Left ventricle myocardium superior (tissue), 1 donor: ENCODE measurements at regions of chr2 and their contacts with region 1.

Region 1: DNA sequence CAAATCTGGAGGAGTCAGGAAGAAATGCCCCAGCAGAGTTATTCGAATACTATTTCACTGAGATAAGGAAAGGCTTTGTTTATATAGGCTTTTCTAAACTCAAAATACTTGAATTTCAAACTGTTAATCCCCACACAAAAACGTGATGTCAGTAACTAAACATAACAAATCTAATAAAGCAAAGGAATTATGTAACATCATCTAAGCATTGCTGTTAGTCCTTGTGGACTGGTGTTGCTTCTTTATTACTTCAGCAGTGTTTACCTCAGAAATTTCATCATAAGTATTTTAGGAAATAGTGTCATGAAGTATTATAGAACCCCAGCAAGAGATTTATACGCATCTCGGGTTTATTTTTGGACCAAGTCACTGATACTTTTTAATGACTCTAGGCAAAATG is 19.7 kb upstream of the SANBR start:
- DNase-seq: no peak
- ATAC-seq: no peak

Region 2: DNA sequence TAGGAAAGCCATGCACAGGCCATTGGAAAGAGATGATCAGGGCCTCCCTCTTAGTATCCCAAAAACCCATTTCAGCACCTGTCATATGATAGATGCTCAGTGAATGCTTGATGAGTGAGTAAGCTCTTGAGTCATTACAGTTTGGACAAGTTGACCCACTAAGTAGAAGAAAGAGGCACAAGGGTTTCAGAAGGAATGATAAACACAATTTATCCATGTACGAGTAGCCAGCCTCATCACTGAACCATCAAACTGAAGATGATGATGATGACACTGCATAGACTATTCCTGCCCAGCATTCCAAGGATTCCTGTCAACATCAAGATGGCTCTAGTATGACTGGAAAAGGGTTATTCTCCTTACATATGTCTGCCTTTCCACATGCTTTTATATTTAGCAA is 1088.5 kb before region 1 on chr2:
- intact Hi-C with region 1: no loop called
- DNase-seq: no peak
- ATAC-seq: no peak

Region 3: DNA sequence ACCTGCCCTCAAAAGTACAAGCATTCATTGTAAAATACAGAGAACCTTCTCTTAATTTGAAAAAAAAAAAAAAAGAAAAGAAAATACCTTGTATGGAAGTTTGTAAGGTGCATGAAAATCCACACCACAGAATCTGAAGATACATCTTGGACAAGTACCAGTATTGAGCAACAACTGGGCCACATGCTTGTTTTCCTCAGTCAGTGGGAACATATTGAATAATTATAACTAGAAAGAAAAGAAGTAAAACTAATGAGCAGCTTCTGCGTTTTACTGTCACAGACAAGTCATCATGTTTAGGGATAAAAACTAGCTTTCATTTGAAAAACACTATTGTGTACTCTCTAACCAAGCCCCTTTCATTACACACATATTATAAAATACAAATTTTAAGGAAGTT is 34.3 kb before region 1 on chr2:
- intact Hi-C with region 1: loop called (anchors 2 kb)
- DNase-seq: no peak
- ATAC-seq: no peak

Region 4: DNA sequence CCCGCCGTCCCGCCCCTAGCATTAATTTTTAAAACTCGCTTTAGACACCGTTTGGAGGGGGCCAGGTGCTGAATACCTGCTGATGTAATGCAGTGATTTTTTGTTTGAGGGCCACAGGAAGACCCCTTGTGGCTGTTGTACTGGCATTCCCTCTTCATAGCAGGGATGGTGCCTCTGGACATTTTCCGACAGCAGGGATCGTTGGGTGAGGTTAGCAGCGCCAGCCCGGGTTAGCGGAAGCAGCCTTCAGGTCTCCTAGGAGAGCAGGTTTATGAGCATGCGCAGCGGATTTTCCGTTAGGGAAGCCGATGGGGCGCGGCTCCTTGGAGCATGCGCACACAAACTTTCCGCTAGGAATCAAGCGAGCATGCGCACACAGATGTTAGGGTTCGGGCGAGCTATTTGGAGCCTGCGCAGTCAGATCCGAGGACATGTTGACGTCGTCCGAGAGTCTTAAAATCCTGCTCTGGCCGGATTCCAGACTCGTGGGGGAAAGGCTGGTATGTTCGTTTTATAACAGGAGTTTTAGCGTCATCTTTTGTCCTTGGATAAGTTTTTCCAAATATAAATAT is 98.8 kb after region 1 on chr2:
- intact Hi-C with region 1: no loop called
- DNase-seq: peak; percentile 96
- ATAC-seq: peak; percentile 99

Region 5: GRCh38 chr2:61196671-61197070 is 150.7 kb after region 1 on chr2:
- intact Hi-C with region 1: no loop called
- DNase-seq: no peak
- ATAC-seq: peak; percentile 20